ENCODE measurements at regions of chr6 and their contacts with region 1.

Region 1: GRCh38 chr6:4775584-4776494 is at the start of gene CDYL:
- DNase-seq: peak; percentile 85 to 93
- H3K4me3 ChIP-seq: peak within 1 kb of the TSS; percentile 76
- H3K4me3 Mint-ChIP-seq: peak within 1 kb of the TSS; percentile 93
- H3K27ac Mint-ChIP-seq: peak within 1 kb of the TSS; percentile 89
- H3K4me1 ChIP-seq: no peaks in the 10 kb centered on the region
- H3K4me1 Mint-ChIP-seq: peaks cover 8% of the 10 kb centered on the region
- H3K27me3 ChIP-seq: no peaks in the 10 kb centered on the region
- H3K27me3 Mint-ChIP-seq: no peaks in the 10 kb centered on the region
- CTCF ChIP-seq: peak in 1 of 2 experiments; percentile 16
- total RNA-seq, gene CDYL: 41.6 and 51.2 TPM in 2 replicates

Region 2: DNA sequence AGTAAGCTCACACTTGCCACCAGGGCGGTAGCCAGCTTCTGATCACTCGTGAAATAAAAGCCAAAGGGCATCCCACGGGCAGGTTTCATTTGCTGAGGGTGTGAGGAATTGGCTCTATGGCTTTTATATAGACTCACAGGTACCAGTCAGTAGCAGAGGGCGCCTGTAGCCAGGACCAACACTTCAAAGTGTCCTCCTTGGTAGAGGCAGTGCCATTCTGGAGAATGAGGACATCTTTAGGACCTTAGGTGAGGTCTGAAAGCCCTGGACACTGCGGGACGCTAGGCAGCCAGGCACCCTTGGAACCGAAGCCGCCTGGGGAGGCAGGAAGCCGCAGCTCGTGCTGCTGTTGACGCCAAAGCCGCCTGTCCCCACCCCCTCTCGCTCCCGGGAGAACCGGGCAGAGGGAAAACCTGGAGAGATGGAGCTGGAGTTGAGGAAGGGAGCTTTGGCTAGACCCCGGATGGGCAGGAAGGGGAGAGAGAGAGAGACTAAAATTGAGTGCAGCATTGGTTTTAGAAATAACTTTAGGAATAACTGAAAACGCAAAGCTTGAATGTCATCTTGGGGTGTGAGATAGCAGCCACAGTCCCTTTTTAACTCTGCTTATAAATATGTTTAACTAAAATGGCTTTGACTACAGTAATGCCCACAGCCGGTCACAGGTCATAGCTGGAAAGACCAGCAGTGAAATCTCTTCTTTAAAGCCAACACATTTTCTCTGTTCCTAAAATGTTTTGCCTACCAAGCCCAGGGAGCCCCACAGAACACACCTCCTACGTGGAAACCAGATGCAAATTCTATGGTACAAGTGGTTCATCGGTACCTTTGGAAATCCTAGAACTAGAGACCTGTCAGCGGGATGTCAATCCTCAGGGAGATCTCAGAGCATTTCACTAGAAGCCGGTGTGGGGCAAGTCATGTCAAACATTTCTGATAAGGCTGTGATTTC is 128.1 kb before region 1 on chr6:
- CTCF ChIA-PET with region 1: no interaction called
- POLR2A ChIA-PET with region 1: interaction called, 3 read pairs
- intact Hi-C with region 1: loop called (anchors 2 kb)
- DNase-seq: peak; percentile 84 to 87
- H3K4me3 ChIP-seq: peak overlapping the region; percentile 22
- H3K4me3 Mint-ChIP-seq: peak overlapping the region; percentile 76
- H3K27ac Mint-ChIP-seq: no peak overlapping the region
- H3K4me1 ChIP-seq: peaks cover 24% of the 10 kb centered on the region
- H3K4me1 Mint-ChIP-seq: peaks cover 9% of the 10 kb centered on the region
- H3K27me3 ChIP-seq: no peaks in the 10 kb centered on the region
- H3K27me3 Mint-ChIP-seq: peaks cover 4% of the 10 kb centered on the region
- CTCF ChIP-seq: no peak

Region 3: DNA sequence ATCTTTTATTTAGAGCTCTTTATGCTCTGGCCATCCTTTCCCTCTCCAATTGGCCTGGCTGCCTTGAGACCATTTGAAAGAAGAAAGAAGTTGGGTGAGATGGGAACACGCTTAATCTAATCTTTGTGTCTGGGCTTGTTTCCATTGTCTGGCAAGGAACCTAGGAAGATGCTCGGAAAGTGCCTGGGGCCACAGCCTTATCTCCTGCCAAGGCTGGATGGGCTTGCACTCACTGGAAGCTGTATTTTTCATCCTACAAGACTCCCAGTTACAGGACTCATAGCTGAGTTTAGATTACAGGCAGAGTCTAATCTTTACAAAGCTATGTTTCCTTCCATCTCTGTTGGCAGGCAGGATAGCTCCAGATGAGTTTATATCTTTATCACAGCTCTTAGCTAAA is 32.8 kb before region 1 on chr6:
- CTCF ChIA-PET with region 1: no interaction called
- POLR2A ChIA-PET with region 1: no interaction called
- intact Hi-C with region 1: no loop called
- DNase-seq: no peak
- H3K4me3 ChIP-seq: no peak overlapping the region
- H3K4me3 Mint-ChIP-seq: no peak overlapping the region
- H3K27ac Mint-ChIP-seq: no peak overlapping the region
- H3K4me1 ChIP-seq: peaks cover 15% of the 10 kb centered on the region
- H3K4me1 Mint-ChIP-seq: peaks cover 7% of the 10 kb centered on the region
- H3K27me3 ChIP-seq: no peaks in the 10 kb centered on the region
- H3K27me3 Mint-ChIP-seq: no peaks in the 10 kb centered on the region
- CTCF ChIP-seq: no peak